ENCODE measurements at regions of chr2 and their contacts with region 1.

Region 1: GRCh38 chr2:15939854-15940660 is at the start of gene MYCN:
- DNase-seq: no peak
- ATAC-seq: peak; percentile 18 to 51
- H3K4me3 ChIP-seq: peak within 1 kb of the TSS; percentile 57
- H3K27ac ChIP-seq: no peak within 1 kb of the TSS
- H3K4me1 ChIP-seq: peaks cover 47% of the 10 kb centered on the region
- H3K27me3 ChIP-seq: peaks cover 43% of the 10 kb centered on the region
- CTCF ChIP-seq: peak; percentile 73
- total RNA-seq, gene MYCN: 0.68 TPM

Region 2: DNA sequence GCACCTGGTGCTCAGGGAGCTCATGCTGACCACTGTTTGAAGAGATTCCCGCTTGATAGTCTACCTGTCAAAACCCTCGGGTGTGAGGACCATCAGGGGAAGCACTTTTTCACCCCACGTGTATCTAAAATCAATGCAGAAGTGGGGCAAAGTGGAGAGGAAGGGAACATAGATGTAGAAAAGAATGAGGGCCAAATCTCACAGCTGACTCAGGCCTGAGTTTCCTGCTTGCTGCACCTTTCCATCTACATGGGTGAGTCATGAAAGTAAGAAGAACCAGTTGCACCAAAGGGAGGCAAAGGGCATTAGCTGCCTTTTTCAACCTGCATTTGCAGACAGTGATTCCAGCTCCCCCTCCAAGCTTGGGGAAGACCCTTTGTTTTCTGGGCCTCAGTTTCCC is 99.9 kb before region 1 on chr2:
- intact Hi-C with region 1: no loop called
- DNase-seq: no peak
- ATAC-seq: no peak
- H3K4me3 ChIP-seq: no peak overlapping the region
- H3K27ac ChIP-seq: no peak overlapping the region
- H3K4me1 ChIP-seq: no peaks in the 10 kb centered on the region
- H3K27me3 ChIP-seq: no peaks in the 10 kb centered on the region
- CTCF ChIP-seq: no peak

Region 3: DNA sequence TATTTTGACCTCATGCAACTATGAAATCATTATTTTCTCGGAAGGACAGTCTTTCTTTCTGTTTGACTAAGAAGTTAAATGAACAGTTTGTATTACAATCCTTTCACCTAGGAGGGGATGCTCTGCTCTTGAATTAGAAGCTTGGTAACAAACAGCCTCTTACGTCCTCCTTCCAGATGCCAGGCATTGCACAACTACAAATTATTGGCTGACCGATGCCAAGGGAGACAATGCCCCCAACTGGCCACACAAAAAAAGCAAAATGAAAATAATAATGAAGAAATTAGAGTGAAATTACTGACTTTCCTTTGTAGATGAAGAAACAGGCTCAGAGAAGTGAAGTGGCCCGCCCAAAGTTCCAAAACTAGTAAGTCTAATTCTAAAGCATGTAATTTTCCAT is 547.6 kb after region 1 on chr2:
- intact Hi-C with region 1: loop called (anchors 10 kb)
- DNase-seq: no peak
- ATAC-seq: peak in 1 of 2 donors; percentile 70
- H3K4me3 ChIP-seq: no peak overlapping the region
- H3K27ac ChIP-seq: no peak overlapping the region
- H3K4me1 ChIP-seq: no peaks in the 10 kb centered on the region
- H3K27me3 ChIP-seq: peaks cover 11% of the 10 kb centered on the region
- CTCF ChIP-seq: peak; percentile 52

Measured in lower lobe of right lung (tissue), 2 donors.